MCF 10A (cell line): ENCODE measurements at regions of chrX and their contacts with region 1.

Region 1: DNA sequence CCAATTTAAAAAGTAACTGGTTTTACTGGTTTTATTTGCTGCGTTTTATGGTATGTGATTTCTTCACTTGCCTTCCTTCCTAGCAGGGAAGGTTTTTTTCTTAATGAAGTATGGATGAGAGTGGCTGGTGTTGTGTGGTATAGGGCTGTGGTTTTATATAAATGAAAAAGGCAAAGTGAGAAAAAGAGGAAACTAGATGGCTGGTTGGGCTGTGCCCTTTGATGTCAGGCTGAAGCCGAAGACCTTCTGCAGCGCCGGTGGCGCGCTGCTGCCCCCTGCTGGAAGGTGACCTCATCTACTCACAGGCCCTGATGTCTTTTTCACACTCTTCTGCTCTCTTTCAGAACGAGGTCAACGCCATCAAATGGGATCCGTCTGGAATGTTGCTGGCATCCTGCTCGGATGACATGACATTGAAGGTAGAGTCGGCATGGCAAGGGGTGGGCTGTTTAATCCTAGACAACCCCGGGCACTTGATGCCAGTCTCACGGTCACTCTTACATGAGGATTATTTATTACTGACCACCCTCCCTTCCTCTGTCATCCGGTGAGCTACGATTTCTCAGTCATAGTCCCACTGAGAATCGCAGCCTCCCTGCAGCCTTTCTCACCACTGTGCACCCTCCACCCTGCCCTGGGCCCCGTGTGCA is 56.6 kb downstream of the GPR143 start:
- DNase-seq: peak; percentile 78
- H3K4me3 Mint-ChIP-seq: no peak overlapping the region
- H3K27ac Mint-ChIP-seq: peak overlapping the region; percentile 36
- H3K4me1 Mint-ChIP-seq: no peaks in the 10 kb centered on the region
- H3K27me3 Mint-ChIP-seq: no peaks in the 10 kb centered on the region
- CTCF ChIP-seq: peak; percentile 89

Region 2: DNA sequence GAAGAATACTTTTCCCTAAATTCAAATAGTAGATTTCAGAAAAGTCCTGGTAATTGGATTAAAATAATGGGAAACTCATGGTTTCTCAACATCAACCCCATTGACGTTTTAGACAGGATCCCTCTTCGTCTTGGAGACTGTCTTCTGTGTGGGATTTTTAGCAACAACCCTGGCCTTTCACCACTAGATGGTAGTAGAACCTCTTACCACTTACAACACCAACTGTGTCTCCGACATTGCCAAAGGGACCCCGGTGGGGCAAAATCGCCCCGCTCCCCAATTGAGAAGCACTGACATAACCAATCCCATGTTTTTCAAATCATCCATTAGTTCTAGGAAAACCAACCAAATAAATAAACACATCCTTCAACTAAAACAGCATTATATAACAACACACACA is 960.2 kb before region 1 on chrX:
- CTCF ChIA-PET with region 1: interaction called, 4 read pairs
- POLR2A ChIA-PET with region 1: no interaction called
- intact Hi-C with region 1: loop called (anchors 1 kb)
- DNase-seq: peak; percentile 43
- H3K4me3 Mint-ChIP-seq: no peak overlapping the region
- H3K27ac Mint-ChIP-seq: no peak overlapping the region
- H3K4me1 Mint-ChIP-seq: no peaks in the 10 kb centered on the region
- H3K27me3 Mint-ChIP-seq: peaks cover 7% of the 10 kb centered on the region
- CTCF ChIP-seq: peak; percentile 43

Region 3: GRCh38 chrX:8868906-8869305 is 840.1 kb before region 1 on chrX:
- CTCF ChIA-PET with region 1: no interaction called
- POLR2A ChIA-PET with region 1: no interaction called
- intact Hi-C with region 1: loop called (anchors 1 kb)
- DNase-seq: peak; percentile 34
- H3K4me3 Mint-ChIP-seq: no peak overlapping the region
- H3K27ac Mint-ChIP-seq: no peak overlapping the region
- H3K4me1 Mint-ChIP-seq: peaks cover 9% of the 10 kb centered on the region
- H3K27me3 Mint-ChIP-seq: no peaks in the 10 kb centered on the region
- CTCF ChIP-seq: no peak

Region 4: GRCh38 chrX:9352694-9353411 is 356.2 kb before region 1 on chrX:
- CTCF ChIA-PET with region 1: no interaction called
- POLR2A ChIA-PET with region 1: no interaction called
- intact Hi-C with region 1: loop called (anchors 1 kb)
- DNase-seq: peak; percentile 78
- H3K4me3 Mint-ChIP-seq: peak overlapping the region; percentile 29
- H3K27ac Mint-ChIP-seq: peak overlapping the region; percentile 73
- H3K4me1 Mint-ChIP-seq: peaks cover 6% of the 10 kb centered on the region
- H3K27me3 Mint-ChIP-seq: peaks cover 32% of the 10 kb centered on the region
- CTCF ChIP-seq: no peak

Region 5: DNA sequence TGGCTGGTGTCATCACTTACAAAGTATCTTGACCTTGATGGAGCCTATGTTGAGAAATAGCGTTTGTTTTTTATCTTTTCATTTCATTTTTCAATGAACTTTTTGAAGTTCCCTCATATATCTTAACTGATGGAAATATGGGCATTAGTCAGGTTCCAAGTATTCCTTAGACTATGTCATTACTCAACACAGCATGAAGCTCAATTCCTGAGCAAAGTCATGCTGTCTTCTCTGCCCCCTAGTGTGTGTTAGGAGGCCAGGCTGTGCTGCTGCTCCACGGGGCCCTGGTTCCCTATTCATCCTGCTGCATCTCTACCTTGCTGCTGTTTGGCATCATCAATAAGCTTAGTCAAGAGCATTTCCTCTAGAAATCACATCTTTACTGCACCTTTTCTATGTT is 15.7 kb after region 1 on chrX:
- CTCF ChIA-PET with region 1: interaction called, 10 read pairs
- POLR2A ChIA-PET with region 1: no interaction called
- intact Hi-C with region 1: no loop called
- DNase-seq: peak; percentile 26
- H3K4me3 Mint-ChIP-seq: no peak overlapping the region
- H3K27ac Mint-ChIP-seq: no peak overlapping the region
- H3K4me1 Mint-ChIP-seq: no peaks in the 10 kb centered on the region
- H3K27me3 Mint-ChIP-seq: no peaks in the 10 kb centered on the region
- CTCF ChIP-seq: no peak